ENCODE measurements at regions of chr22 and their contacts with region 1.

Region 1: DNA sequence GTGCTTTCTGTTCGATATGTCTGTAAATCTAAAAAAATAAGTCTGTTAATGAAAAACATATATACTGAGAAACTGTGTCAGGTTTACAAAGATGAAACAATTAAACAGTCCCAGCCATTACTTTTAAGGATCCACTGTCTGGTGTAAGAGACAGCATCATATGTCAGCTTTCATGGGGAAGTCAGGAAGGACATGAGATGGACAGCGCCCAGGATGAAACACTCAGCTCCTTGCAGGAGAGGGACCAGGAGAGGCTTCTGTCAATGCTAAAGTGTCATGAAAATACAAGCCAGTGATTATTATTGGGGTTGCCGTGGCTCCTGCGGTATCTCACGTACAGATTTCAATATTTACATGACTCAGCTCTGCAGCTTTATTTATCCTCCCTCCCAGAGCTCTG is 1524.6 kb downstream of the TBC1D22A start:
- DNase-seq: no peak
- H3K4me3 ChIP-seq: no peak overlapping the region
- H3K27ac ChIP-seq: no peak overlapping the region
- H3K4me1 ChIP-seq: no peaks in the 10 kb centered on the region
- H3K27me3 ChIP-seq: no peaks in the 10 kb centered on the region
- CTCF ChIP-seq: no peak

Region 2: GRCh38 chr22:48227341-48228018 is 59.5 kb before region 1 on chr22:
- CTCF ChIA-PET with region 1: no interaction called
- dilution Hi-C with region 1: loop called (anchors 5 kb)
- in situ Hi-C with region 1: no loop called
- intact Hi-C with region 1: no loop called
- DNase-seq: no peak
- H3K4me3 ChIP-seq: no peak overlapping the region
- H3K27ac ChIP-seq: no peak overlapping the region
- H3K4me1 ChIP-seq: no peaks in the 10 kb centered on the region
- H3K27me3 ChIP-seq: no peaks in the 10 kb centered on the region
- CTCF ChIP-seq: no peak

Region 3: GRCh38 chr22:48340727-48341709 is 54.0 kb after region 1 on chr22:
- CTCF ChIA-PET with region 1: no interaction called
- dilution Hi-C with region 1: loop called (anchors 10 kb)
- in situ Hi-C with region 1: no loop called
- intact Hi-C with region 1: no loop called
- DNase-seq: no peak
- H3K4me3 ChIP-seq: no peak overlapping the region
- H3K27ac ChIP-seq: no peak overlapping the region
- H3K4me1 ChIP-seq: no peaks in the 10 kb centered on the region
- H3K27me3 ChIP-seq: no peaks in the 10 kb centered on the region
- CTCF ChIP-seq: no peak

Measured in mammary epithelial cell (primary cell).